ENCODE measurements at regions of chr6 and their contacts with region 1.

Region 1: DNA sequence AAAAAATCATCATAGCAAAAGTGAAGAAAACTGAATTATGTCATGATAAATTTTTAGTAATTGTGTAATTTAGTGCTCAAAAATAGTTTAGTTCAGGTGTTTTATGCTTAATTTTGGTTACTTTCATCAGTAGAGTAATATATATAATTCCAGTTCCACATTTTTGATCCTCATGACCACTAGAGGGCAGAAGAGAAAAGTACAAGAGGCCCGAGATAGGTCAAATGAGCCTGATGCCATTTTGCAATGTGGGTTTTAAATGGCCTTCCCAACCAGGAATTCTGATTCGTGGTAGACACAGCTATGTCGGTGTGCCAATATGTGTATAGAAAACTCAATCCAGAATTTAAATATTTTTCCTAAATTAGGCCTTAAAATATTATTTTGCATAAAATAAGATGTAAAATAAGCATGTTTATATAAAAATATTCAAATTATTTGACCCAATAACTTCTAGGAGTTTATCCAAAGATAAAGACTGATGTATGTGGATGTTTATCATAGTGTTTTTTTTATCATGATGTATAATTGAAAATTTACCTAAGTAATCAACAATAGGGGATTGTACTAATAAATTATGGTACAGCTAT is 159.7 kb upstream of the RPS6KA2 start:
- DNase-seq: no peak
- ATAC-seq: peak; percentile 34; the same call in 1 of the 2 replicates
- H3K4me3 Mint-ChIP-seq: no peak overlapping the region
- H3K27ac Mint-ChIP-seq: no peak overlapping the region
- H3K4me1 Mint-ChIP-seq: no peaks in the 10 kb centered on the region
- H3K27me3 Mint-ChIP-seq: no peaks in the 10 kb centered on the region
- CTCF ChIP-seq: peak; percentile 68

Region 2: DNA sequence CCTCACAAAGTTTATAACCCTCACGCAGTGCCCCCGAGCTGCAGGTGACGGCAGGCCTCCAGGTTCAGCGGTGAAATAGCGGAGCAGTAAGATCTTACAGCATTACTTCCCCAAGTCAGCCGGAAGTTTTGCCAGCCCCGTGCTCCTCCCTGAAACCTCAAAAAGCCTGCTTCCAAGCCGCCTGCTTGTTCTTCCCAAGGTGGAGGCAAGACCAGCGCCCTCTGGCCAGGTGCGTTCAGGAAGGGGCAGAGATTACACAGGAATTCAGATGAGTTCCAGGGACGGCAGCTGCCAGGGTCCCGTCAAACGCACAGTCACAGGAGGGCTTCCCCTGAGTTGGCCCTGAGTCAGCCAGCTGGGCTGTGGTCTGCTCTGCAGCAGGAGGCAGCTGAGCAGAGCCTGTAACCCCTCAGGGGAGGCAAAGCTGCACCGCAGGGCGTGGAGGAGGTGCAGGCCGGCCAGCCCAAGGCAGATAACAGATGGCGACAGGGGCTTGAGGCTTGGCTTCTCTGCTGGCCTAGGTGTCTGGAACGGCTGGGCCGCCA is 35.7 kb before region 1 on chr6:
- CTCF ChIA-PET with region 1: no interaction called
- POLR2A ChIA-PET with region 1: no interaction called
- DNase-seq: peak; percentile 44
- ATAC-seq: peak; percentile 34
- H3K4me3 Mint-ChIP-seq: no peak overlapping the region
- H3K27ac Mint-ChIP-seq: no peak overlapping the region
- H3K4me1 Mint-ChIP-seq: peaks cover 39% of the 10 kb centered on the region
- H3K27me3 Mint-ChIP-seq: no peaks in the 10 kb centered on the region; the same call in 1 of the 2 replicates
- CTCF ChIP-seq: no peak

Region 3: GRCh38 chr6:166822609-166823008 is 35.8 kb after region 1 on chr6:
- CTCF ChIA-PET with region 1: no interaction called
- POLR2A ChIA-PET with region 1: no interaction called
- DNase-seq: no peak
- ATAC-seq: no peak
- H3K4me3 Mint-ChIP-seq: no peak overlapping the region
- H3K27ac Mint-ChIP-seq: no peak overlapping the region
- H3K4me1 Mint-ChIP-seq: no peaks in the 10 kb centered on the region
- H3K27me3 Mint-ChIP-seq: no peaks in the 10 kb centered on the region
- CTCF ChIP-seq: no peak

Region 4: DNA sequence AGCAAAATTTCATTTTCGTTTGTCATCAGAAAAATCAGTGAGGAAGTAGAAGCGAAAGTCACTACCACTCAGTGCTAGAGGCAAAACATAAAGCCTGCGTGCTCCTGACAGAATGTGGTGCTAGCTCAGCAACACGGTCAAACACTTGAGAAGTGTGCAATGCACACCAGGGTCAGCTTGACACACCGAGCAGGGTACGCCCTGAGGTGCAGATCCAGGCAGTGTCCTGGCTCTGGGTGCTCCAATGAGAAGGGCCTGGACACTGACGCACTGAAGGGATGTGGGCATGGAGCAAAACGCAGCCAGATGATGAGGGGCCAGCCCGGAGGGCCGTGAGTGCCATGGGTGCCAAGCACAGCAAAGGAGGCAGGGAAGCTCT is 163.6 kb after region 1 on chr6:
- CTCF ChIA-PET with region 1: interaction called, 11 read pairs
- POLR2A ChIA-PET with region 1: no interaction called
- DNase-seq: no peak
- ATAC-seq: no peak
- H3K4me3 Mint-ChIP-seq: no peak overlapping the region
- H3K27ac Mint-ChIP-seq: peak overlapping the region; percentile 91
- H3K4me1 Mint-ChIP-seq: peaks cover 29% of the 10 kb centered on the region
- H3K27me3 Mint-ChIP-seq: peaks cover 6% of the 10 kb centered on the region
- CTCF ChIP-seq: no peak

Region 5: GRCh38 chr6:166989427-166990032 is 202.7 kb after region 1 on chr6:
- CTCF ChIA-PET with region 1: interaction called, 13 read pairs
- POLR2A ChIA-PET with region 1: no interaction called
- DNase-seq: peak; percentile 16
- ATAC-seq: peak; percentile 62
- H3K4me3 Mint-ChIP-seq: no peak overlapping the region
- H3K27ac Mint-ChIP-seq: peak overlapping the region; percentile 5; the same call in 1 of the 2 replicates
- H3K4me1 Mint-ChIP-seq: peaks cover 38% of the 10 kb centered on the region
- H3K27me3 Mint-ChIP-seq: no peaks in the 10 kb centered on the region
- CTCF ChIP-seq: no peak

Measured in WTC11 (cell line).